ENCODE measurements at regions of chrX and their contacts with region 1.

Region 1: DNA sequence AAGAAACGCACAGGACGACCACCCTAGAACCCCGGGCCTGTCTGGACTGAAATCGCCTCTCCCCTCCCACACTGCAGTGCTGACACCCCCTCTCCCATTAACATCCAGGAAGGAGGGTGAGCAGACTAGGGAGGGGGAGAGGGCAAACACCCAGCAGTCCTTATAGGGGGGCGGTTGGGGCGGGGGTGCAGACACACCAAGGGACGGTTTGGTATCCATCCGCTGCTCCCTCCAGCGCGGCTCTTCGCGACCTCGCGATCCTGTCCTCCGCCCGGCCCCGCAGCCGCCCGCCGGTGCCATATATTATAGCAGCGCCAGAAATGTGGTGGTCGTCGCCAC is 411 bp upstream of the GPRASP1 start:
- DNase-seq: no peak
- ATAC-seq: peak in 2 of 3 donors; percentile 36
- H3K4me3 ChIP-seq: peak overlapping the region; percentile 80
- H3K4me3 Mint-ChIP-seq: peak overlapping the region; percentile 98
- H3K27ac ChIP-seq: no peak overlapping the region
- H3K27ac Mint-ChIP-seq: peak overlapping the region; percentile 86 to 94
- H3K4me1 ChIP-seq: peaks cover 20% of the 10 kb centered on the region
- H3K4me1 Mint-ChIP-seq: peaks cover 12 to 29% of the 10 kb centered on the region in 2 donors
- H3K27me3 ChIP-seq: no peaks in the 10 kb centered on the region
- H3K27me3 Mint-ChIP-seq: peaks cover 0 to 6% of the 10 kb centered on the region in 2 donors
- CTCF ChIP-seq: no peak

Region 2: GRCh38 chrX:102599084-102599950 is 51.6 kb before region 1 on chrX and contains the start of gene ARMCX5:
- intact Hi-C with region 1: loop called (anchors 1 kb)
- DNase-seq: peak; percentile 52 to 86
- ATAC-seq: peak; percentile 88 to 94 (median 90)
- H3K4me3 ChIP-seq: peak within 1 kb of the TSS; percentile 67
- H3K4me3 Mint-ChIP-seq: peak within 1 kb of the TSS; percentile 96
- H3K27ac ChIP-seq: peak within 1 kb of the TSS; percentile 75
- H3K27ac Mint-ChIP-seq: peak within 1 kb of the TSS; percentile 91 to 95
- H3K4me1 ChIP-seq: peaks cover 10% of the 10 kb centered on the region
- H3K4me1 Mint-ChIP-seq: peaks cover 23 to 30% of the 10 kb centered on the region in 2 donors
- H3K27me3 ChIP-seq: no peaks in the 10 kb centered on the region
- H3K27me3 Mint-ChIP-seq: peaks cover 0 to 5% of the 10 kb centered on the region in 2 donors
- CTCF ChIP-seq: no peak
- total RNA-seq, gene ARMCX5: 9.0 to 13.3 (median 13.1) TPM